Naive thymus-derived CD4-positive, alpha-beta T cell (primary cell): ENCODE measurements at regions of chr2 and their contacts with region 1.

Region 1: DNA sequence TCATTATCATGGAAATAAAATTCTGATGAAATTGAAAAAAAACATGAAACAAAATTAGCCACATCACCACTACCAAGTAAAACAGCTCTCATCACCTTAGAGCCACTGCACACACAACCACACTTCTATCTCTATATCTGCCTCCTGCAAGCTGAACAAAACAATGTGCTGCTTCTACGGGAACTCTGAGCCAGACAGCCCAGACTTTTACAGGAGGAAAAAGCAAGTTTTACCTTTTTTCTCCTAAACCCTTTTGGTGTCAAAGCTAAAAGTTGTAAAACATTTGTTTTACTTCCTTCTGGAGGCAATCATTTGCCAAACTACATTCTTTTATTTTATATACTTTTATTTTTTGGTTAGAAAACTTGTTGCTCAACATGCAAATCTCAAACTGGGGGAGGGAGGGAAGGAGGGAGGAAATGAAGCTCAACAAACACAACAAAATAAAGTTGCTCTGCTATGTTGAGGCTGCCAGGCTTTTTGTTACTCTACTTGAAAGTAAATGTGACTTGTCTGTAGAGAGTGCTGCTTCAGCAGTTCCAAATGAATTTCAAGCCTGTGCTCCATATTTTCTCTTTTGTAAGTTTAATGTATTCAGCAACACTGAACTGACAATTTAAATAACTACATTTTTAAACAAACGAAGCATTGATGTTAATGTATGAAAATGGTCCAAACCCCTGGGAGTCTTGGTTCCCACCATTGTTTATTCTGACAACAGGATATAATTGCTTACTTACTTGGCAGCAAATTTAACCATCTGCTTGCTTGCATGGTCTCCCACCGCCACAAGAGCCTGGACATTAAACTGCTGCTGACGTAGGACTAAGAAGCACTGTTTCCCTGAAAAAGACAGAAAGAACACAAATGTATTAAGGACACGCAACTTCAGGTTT is 24.5 kb downstream of the DARS1 start:
- DNase-seq: peak in 6 of 9 donors; percentile 3 to 44 (median 26)
- ATAC-seq: peak; percentile 76
- H3K4me3 ChIP-seq: no peak overlapping the region
- H3K4me3 Mint-ChIP-seq: peak overlapping the region in 9 of 10 donors; percentile 3 to 79 (median 37)
- H3K27ac ChIP-seq: peak overlapping the region; percentile 40
- H3K27ac Mint-ChIP-seq: peak overlapping the region; percentile 51 to 93 (median 83)
- H3K4me1 ChIP-seq: peaks cover 18 to 26% of the 10 kb centered on the region in 2 donors
- H3K4me1 Mint-ChIP-seq: peaks cover 37 to 67% (median 60%) of the 10 kb centered on the region in 7 donors
- H3K27me3 ChIP-seq: no peaks in the 10 kb centered on the region
- H3K27me3 Mint-ChIP-seq: no peaks in the 10 kb centered on the region

Region 2: GRCh38 chr2:135948642-135949355 is 12.1 kb before region 1 on chr2:
- CTCF ChIA-PET with region 1: interaction called, 4 read pairs
- POLR2A ChIA-PET with region 1: interaction called, 5 read pairs
- intact Hi-C with region 1: loop called in 1 of 2 experiments (anchors 2 kb)
- DNase-seq: no peak
- ATAC-seq: peak; percentile 61
- H3K4me3 ChIP-seq: no peak overlapping the region
- H3K4me3 Mint-ChIP-seq: peak overlapping the region in 2 of 10 donors; percentile 16 to 40
- H3K27ac ChIP-seq: no peak overlapping the region
- H3K27ac Mint-ChIP-seq: peak overlapping the region in 3 of 9 donors; percentile 69 to 95 (median 94)
- H3K4me1 ChIP-seq: peaks cover 2 to 14% of the 10 kb centered on the region in 2 donors
- H3K4me1 Mint-ChIP-seq: peaks cover 19 to 66% (median 59%) of the 10 kb centered on the region in 7 donors
- H3K27me3 ChIP-seq: no peaks in the 10 kb centered on the region
- H3K27me3 Mint-ChIP-seq: no peaks in the 10 kb centered on the region

Region 3: DNA sequence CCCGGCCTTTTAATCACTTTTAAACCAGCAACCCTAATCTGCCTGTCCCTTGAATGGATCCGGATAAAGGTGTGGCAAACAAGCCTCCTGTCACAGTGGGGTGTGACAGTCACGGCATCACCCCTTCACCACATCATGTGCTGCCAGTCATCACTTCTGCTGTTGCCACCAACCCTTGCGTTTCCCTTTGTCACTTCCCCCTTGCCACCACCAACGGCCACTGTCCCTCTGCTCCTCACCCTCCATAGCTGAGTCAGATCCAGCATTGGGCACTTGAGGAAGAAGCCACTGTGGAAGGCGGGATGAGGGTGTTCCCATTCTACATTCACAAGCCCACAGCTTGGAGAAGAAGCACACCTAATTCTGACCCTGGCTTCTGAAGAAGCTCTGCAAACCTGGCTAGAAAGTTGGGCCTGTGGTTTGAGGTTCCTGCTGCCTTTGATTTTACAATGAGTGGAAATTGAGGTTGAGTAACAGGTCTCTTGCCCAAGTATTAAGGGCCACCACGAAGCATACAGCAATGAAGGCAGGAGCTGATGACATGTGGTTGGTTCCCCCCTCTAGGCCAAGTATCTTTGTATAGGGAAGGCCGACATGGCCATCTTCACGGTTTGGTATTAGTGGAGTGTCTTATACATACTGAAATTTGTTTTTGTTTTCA is 47.4 kb after region 1 on chr2:
- CTCF ChIA-PET with region 1: no interaction called
- POLR2A ChIA-PET with region 1: no interaction called
- intact Hi-C with region 1: no loop called
- DNase-seq: peak; percentile 20 to 53 (median 33)
- ATAC-seq: peak; percentile 94
- H3K4me3 ChIP-seq: no peak overlapping the region
- H3K4me3 Mint-ChIP-seq: peak overlapping the region; percentile 7 to 77 (median 34)
- H3K27ac ChIP-seq: no peak overlapping the region
- H3K27ac Mint-ChIP-seq: peak overlapping the region; percentile 60 to 94 (median 75)
- H3K4me1 ChIP-seq: peaks cover 11 to 20% of the 10 kb centered on the region in 2 donors
- H3K4me1 Mint-ChIP-seq: peaks cover 17 to 48% (median 30%) of the 10 kb centered on the region in 7 donors
- H3K27me3 ChIP-seq: no peaks in the 10 kb centered on the region
- H3K27me3 Mint-ChIP-seq: no peaks in the 10 kb centered on the region